Activated CD4-positive, alpha-beta T cell treated with anti-CD3 and anti-CD28 coated beads for 36 hours (primary cell): ENCODE measurements at regions of chr3 and their contacts with region 1.

Region 1: GRCh38 chr3:12175844-12176453 is 17.2 kb upstream of the TIMP4 start:
- DNase-seq: peak; percentile 69
- ATAC-seq: peak; percentile 18
- H3K4me3 Mint-ChIP-seq: no peak overlapping the region
- H3K27ac Mint-ChIP-seq: no peak overlapping the region
- H3K4me1 Mint-ChIP-seq: peaks cover 17% of the 10 kb centered on the region
- H3K27me3 Mint-ChIP-seq: peaks cover 5% of the 10 kb centered on the region

Region 2: DNA sequence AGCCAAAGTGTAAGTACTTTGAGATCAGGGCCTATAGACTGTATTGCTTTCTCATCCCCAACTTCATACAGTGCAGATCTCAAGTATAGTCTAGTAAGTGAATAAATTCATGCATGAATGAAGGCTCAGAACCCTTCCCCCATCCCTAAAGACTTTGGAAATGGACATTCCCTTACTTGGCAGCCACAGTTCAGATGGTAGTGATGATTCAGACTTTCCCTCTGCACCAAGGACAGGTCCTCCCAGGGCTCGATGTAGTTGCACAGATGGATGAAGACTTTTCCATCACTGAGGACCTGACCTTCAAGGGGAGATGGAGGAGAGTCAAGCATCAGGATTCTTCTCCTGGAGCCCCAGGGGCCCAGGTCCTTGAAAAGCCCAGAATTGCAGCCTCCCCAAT is 21.8 kb before region 1 on chr3:
- CTCF ChIA-PET with region 1: interaction called, 10 read pairs
- POLR2A ChIA-PET with region 1: no interaction called
- intact Hi-C with region 1: no loop called
- DNase-seq: no peak
- ATAC-seq: no peak
- H3K4me3 Mint-ChIP-seq: no peak overlapping the region
- H3K27ac Mint-ChIP-seq: no peak overlapping the region
- H3K4me1 Mint-ChIP-seq: peaks cover 15% of the 10 kb centered on the region
- H3K27me3 Mint-ChIP-seq: peaks cover 5% of the 10 kb centered on the region

Region 3: DNA sequence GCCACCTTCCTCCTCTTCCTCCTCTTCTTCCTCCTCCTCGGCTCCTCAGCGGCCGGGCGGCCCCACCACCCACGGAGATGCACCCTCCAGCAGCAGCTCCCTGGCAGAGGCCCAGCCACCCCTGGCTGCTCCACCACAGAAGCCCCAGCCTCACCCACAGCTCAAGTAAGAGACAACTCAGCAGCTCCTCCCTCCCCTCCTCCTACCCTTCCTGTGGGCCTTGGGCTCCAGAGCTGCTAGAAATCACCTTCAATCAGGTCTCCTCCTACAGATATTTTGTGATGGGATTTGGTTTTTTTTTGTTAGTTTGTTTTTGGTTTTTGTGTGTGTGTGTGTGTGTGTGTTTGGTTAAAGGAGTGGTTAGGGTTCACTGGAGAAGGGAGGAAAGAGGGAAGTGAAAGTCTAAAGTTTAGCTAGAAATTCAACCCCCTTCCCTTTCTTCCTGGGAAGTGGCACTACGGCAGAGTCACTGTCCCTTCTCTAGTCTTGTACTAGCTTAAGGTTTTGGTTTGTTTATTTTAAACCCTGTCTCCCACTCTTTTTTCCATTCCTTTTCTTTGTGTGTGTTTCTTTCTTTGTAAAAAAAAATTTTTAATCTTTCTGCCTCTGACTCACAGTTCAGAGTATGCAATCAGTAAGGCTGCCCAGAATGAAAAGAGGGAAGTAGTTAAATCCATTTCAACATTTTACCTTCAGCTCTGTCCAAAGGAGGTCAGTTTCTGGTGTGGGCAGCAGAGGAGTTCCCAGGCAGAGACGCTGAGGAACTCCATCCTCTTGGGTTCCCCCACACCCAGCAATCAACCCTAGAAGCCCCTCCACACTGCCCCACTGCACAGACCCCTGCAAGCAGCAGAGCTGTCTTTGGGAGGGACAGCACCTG is 11.7 kb after region 1 on chr3:
- CTCF ChIA-PET with region 1: interaction called, 14 read pairs
- POLR2A ChIA-PET with region 1: no interaction called
- intact Hi-C with region 1: no loop called
- DNase-seq: peak; percentile 90
- ATAC-seq: peak; percentile 92
- H3K4me3 Mint-ChIP-seq: peak overlapping the region; percentile 56
- H3K27ac Mint-ChIP-seq: peak overlapping the region; percentile 94
- H3K4me1 Mint-ChIP-seq: peaks cover 52% of the 10 kb centered on the region
- H3K27me3 Mint-ChIP-seq: peaks cover 5% of the 10 kb centered on the region